ENCODE measurements at regions of chr1 and their contacts with region 1.

Region 1: DNA sequence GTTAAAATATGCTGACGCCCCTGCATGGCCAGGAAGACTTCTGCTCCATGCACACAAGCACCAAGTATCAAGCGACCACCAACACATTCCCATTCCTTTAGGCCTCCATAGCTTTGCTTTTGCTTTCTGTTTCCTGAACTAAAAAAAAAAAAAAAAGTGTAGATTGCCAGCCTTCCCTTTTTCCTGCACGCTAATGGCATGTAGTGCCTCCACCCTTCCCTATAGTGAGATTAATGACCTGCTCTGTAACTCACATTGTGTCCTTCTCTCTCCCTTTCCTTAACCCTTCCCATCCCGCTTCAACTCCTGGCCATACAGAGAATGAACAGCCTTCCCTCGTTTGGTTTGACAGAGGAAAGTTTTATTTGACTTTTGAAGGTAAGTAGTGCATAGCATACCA is 57.1 kb upstream of the DYNLT5 start:
- DNase-seq: no peak
- H3K4me3 ChIP-seq: no peak overlapping the region
- H3K27ac ChIP-seq: no peak overlapping the region
- H3K4me1 ChIP-seq: no peaks in the 10 kb centered on the region
- H3K27me3 ChIP-seq: no peaks in the 10 kb centered on the region
- CTCF ChIP-seq: no peak

Region 2: GRCh38 chr1:65182658-65183268 is 1512.4 kb before region 1 on chr1:
- CTCF ChIA-PET with region 1: no interaction called
- dilution Hi-C with region 1: no loop called
- in situ Hi-C with region 1: no loop called
- intact Hi-C with region 1: loop called (anchors 5 kb)
- DNase-seq: no peak
- H3K4me3 ChIP-seq: no peak overlapping the region
- H3K27ac ChIP-seq: no peak overlapping the region
- H3K4me1 ChIP-seq: peaks cover 32% of the 10 kb centered on the region
- H3K27me3 ChIP-seq: no peaks in the 10 kb centered on the region
- CTCF ChIP-seq: no peak

Region 3: GRCh38 chr1:66676613-66677298 is 18.4 kb before region 1 on chr1:
- CTCF ChIA-PET with region 1: no interaction called
- dilution Hi-C with region 1: no loop called
- in situ Hi-C with region 1: no loop called
- intact Hi-C with region 1: no loop called
- DNase-seq: peak; percentile 16
- H3K4me3 ChIP-seq: no peak overlapping the region
- H3K27ac ChIP-seq: no peak overlapping the region
- H3K4me1 ChIP-seq: no peaks in the 10 kb centered on the region
- H3K27me3 ChIP-seq: no peaks in the 10 kb centered on the region
- CTCF ChIP-seq: no peak

Measured in mammary epithelial cell (primary cell).